ENCODE measurements at regions of chr5 and their contacts with region 1.

Region 1: DNA sequence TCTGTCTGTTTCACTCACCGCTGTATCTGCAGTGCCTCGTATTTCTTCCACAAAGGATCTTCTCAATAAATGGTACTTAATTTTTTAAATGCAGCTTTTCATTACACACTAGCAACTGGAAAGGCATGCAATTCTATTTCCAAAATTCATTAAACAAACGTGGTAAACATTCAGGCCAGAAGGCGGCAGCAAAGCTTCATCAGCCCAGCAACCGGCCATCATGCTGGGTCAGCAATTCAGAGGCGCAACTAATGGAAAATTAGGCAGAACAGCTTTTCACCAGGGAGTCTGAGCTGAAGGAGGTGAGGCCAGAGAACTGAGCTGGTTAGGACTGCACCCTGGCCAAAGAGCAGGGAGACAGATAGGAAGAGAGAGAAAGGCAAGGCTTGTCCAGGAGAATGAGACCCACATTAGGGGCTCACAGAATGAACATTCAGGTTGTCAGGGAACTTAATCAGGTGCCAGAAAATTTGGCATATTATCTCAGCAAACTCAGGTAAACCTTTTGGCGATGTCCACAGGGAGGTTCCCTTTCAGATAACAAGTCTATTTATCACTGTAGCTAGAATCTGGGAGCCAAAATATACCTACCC is 17.7 kb upstream of the RNF180 start:
- DNase-seq: no peak
- ATAC-seq: peak; percentile 76
- H3K4me3 ChIP-seq: no peak overlapping the region
- H3K27ac ChIP-seq: no peak overlapping the region
- H3K4me1 ChIP-seq: no peaks in the 10 kb centered on the region
- H3K27me3 ChIP-seq: no peaks in the 10 kb centered on the region
- CTCF ChIP-seq: peak; percentile 57 to 82 (median 67)
- EP300 ChIP-seq: no peak
- POLR2A ChIP-seq: no peak
- RAD21 ChIP-seq: peak; percentile 73

Region 2: GRCh38 chr5:63573380-63573779 is 574.6 kb before region 1 on chr5:
- CTCF ChIA-PET with region 1: no interaction called
- POLR2A ChIA-PET with region 1: no interaction called
- RAD21 ChIA-PET with region 1: no interaction called
- SMC1A ChIA-PET with region 1: no interaction called
- in situ Hi-C with region 1: no loop called
- intact Hi-C with region 1: no loop called
- DNase-seq: no peak
- ATAC-seq: peak; percentile 90
- H3K4me3 ChIP-seq: no peak overlapping the region
- H3K27ac ChIP-seq: no peak overlapping the region
- H3K4me1 ChIP-seq: no peaks in the 10 kb centered on the region
- H3K27me3 ChIP-seq: no peaks in the 10 kb centered on the region
- CTCF ChIP-seq: no peak
- EP300 ChIP-seq: no peak
- POLR2A ChIP-seq: no peak
- RAD21 ChIP-seq: no peak

Region 3: DNA sequence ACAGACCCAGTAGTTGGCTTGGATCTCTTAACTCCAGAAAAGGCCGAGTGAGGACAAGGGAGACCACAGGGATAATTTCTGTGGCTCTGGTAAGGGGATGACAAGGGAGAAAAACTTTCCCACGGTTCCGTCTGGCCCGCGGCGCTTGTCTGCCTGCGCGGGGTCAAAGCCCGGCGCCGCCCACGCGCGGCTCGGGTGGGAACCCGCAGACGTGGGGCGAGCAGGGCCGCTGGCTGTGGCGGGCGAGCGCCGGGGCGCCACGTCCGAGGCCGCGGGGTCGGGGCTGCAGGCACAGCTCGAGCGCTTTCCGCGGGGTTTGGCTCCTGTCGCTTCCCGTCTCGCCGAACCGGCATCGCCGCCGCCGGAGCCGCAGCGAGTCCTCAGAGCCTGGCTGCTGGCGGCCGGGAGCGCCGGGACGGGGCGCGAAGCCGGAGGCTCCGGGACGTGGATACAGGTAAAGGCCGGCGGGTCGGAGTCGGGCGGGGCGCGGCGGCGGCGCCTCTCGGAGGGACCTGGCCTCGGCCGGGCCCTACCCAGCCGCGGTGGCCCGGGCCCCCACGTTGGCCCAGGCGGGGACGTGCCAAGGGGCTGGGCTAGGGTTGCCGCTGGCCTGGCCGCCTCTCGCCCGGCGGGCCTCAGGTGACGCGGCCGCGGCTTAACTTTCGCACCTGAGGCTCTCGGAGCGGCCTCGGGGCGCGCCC is 17.7 kb after region 1 on chr5 and contains the start of gene RNF180:
- CTCF ChIA-PET with region 1: interaction called, 54 read pairs
- POLR2A ChIA-PET with region 1: no interaction called
- RAD21 ChIA-PET with region 1: interaction called, 13 read pairs
- SMC1A ChIA-PET with region 1: interaction called, 8 read pairs
- in situ Hi-C with region 1: no loop called
- intact Hi-C with region 1: no loop called
- DNase-seq: no peak
- ATAC-seq: peak; percentile 21
- H3K4me3 ChIP-seq: no peak within 1 kb of the TSS
- H3K27ac ChIP-seq: no peak within 1 kb of the TSS
- H3K4me1 ChIP-seq: no peaks in the 10 kb centered on the region
- H3K27me3 ChIP-seq: peaks cover 0 to 13% of the 10 kb centered on the region in 2 experiments
- CTCF ChIP-seq: no peak
- EP300 ChIP-seq: no peak
- POLR2A ChIP-seq: no peak
- RAD21 ChIP-seq: no peak
- polyA plus RNA-seq, gene RNF180: 0.16 to 0.20 TPM

Region 4: GRCh38 chr5:64213531-64213930 is 65.6 kb after region 1 on chr5:
- CTCF ChIA-PET with region 1: interaction called, 120 read pairs
- POLR2A ChIA-PET with region 1: interaction called, 3 read pairs
- RAD21 ChIA-PET with region 1: interaction called, 99 read pairs
- SMC1A ChIA-PET with region 1: interaction called, 115 read pairs
- in situ Hi-C with region 1: loop called (anchors 5 kb)
- intact Hi-C with region 1: loop called (anchors 1 kb)
- DNase-seq: no peak
- ATAC-seq: peak; percentile 45
- H3K4me3 ChIP-seq: no peak overlapping the region
- H3K27ac ChIP-seq: no peak overlapping the region
- H3K4me1 ChIP-seq: no peaks in the 10 kb centered on the region
- H3K27me3 ChIP-seq: no peaks in the 10 kb centered on the region
- CTCF ChIP-seq: no peak
- EP300 ChIP-seq: no peak
- POLR2A ChIP-seq: no peak
- RAD21 ChIP-seq: no peak

Region 5: GRCh38 chr5:64384761-64385160 is 236.8 kb after region 1 on chr5:
- CTCF ChIA-PET with region 1: interaction called, 4 read pairs
- POLR2A ChIA-PET with region 1: no interaction called
- RAD21 ChIA-PET with region 1: no interaction called
- SMC1A ChIA-PET with region 1: interaction called, 3 read pairs
- in situ Hi-C with region 1: no loop called
- intact Hi-C with region 1: loop called (anchors 10 kb)
- DNase-seq: no peak
- ATAC-seq: peak; percentile 98
- H3K4me3 ChIP-seq: no peak overlapping the region
- H3K27ac ChIP-seq: no peak overlapping the region
- H3K4me1 ChIP-seq: no peaks in the 10 kb centered on the region
- H3K27me3 ChIP-seq: no peaks in the 10 kb centered on the region
- CTCF ChIP-seq: peak; percentile 9 to 26 (median 24); a peak in 3 of 6 replicates
- EP300 ChIP-seq: no peak
- POLR2A ChIP-seq: no peak
- RAD21 ChIP-seq: no peak; the same call in 1 of the 2 replicates

Region 6: DNA sequence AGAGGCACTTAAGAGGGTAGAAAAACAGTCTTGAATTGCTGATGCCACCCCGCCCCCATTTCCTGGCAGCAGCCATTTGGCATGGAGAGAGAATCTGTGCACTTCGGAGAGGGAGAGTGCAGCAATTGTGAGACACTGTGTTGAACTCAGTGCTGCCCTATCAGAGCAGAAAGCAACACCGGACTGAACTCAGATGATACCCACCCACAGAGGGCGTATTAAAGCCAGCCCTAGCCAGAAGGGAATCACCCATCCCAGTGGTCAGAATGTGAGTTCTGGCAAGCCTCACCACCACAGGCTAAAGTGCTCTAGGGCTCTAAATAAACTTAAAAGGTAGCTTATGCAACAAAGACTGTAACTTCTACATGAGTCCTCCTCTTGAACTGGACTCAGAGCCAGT is 269.4 kb after region 1 on chr5:
- CTCF ChIA-PET with region 1: no interaction called
- POLR2A ChIA-PET with region 1: no interaction called
- RAD21 ChIA-PET with region 1: no interaction called
- SMC1A ChIA-PET with region 1: no interaction called
- in situ Hi-C with region 1: no loop called
- intact Hi-C with region 1: no loop called
- DNase-seq: no peak
- ATAC-seq: peak; percentile 30; the same call in 1 of the 3 replicates
- H3K4me3 ChIP-seq: no peak overlapping the region
- H3K27ac ChIP-seq: no peak overlapping the region
- H3K4me1 ChIP-seq: no peaks in the 10 kb centered on the region
- H3K27me3 ChIP-seq: no peaks in the 10 kb centered on the region
- CTCF ChIP-seq: no peak
- EP300 ChIP-seq: no peak
- POLR2A ChIP-seq: no peak
- RAD21 ChIP-seq: no peak